CD8-positive, alpha-beta T cell (primary cell): ENCODE measurements at regions of chr6 and their contacts with region 1.

Region 1: DNA sequence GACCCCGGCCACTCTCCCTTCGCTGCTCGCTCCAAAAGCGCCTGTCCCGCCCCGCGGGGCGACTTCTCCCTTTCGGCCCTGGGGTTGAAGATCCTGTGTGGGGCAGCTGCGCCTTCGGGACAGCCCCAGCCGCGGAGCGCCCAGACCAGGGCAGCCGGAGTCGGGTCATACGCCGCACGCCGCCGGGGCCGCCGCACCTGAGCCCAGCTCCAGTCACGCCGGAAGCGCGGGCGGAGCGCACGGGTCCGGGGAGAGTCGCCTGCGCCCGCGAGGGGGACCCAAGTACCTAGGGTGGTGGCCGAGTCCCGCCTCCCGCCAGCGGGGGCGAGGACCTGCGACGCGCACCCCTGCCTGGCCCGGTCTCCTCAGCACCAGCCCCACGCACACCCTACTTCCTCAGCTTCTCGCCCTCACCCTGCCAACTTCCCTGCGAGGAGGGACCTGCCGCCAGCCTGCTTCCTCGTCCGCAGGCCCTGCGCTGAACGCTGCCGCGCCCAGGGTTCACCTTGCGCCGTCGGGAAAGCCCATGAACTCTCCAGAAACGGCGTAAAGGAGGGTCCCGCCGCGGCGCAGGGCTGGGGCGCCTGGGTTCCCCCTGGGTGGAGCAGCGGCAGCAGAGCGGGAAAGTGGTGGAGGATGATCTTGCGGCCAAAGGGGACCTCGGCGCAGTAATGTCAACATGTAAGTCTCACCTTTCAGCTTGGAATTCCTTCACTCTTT is at the start of gene ADGRG6:
- DNase-seq: peak in 8 of 9 experiments; percentile 4 to 69 (median 38)
- ATAC-seq: peak; percentile 70
- H3K4me3 ChIP-seq: peak within 1 kb of the TSS; percentile 42 to 61
- H3K4me3 Mint-ChIP-seq: peak within 1 kb of the TSS; percentile 85
- H3K27ac ChIP-seq: no peak within 1 kb of the TSS
- H3K27ac Mint-ChIP-seq: peak within 1 kb of the TSS; percentile 66
- H3K4me1 ChIP-seq: peaks cover 4% of the 10 kb centered on the region
- H3K4me1 Mint-ChIP-seq: peaks cover 15% of the 10 kb centered on the region
- H3K27me3 ChIP-seq: no peaks in the 10 kb centered on the region
- H3K27me3 Mint-ChIP-seq: peaks cover 15% of the 10 kb centered on the region
- CTCF ChIP-seq: no peak
- total RNA-seq, gene ADGRG6: 0.54 to 0.61 TPM

Region 2: GRCh38 chr6:142236691-142237090 is 65.1 kb before region 1 on chr6:
- CTCF ChIA-PET with region 1: interaction called, 3 read pairs
- POLR2A ChIA-PET with region 1: interaction called, 3 read pairs
- intact Hi-C with region 1: loop called in 1 of 2 experiments (anchors 10 kb)
- DNase-seq: no peak
- ATAC-seq: no peak
- H3K4me3 ChIP-seq: no peak overlapping the region
- H3K4me3 Mint-ChIP-seq: no peak overlapping the region
- H3K27ac ChIP-seq: no peak overlapping the region
- H3K27ac Mint-ChIP-seq: no peak overlapping the region
- H3K4me1 ChIP-seq: peaks cover 15% of the 10 kb centered on the region
- H3K4me1 Mint-ChIP-seq: peaks cover 18% of the 10 kb centered on the region
- H3K27me3 ChIP-seq: no peaks in the 10 kb centered on the region
- H3K27me3 Mint-ChIP-seq: peaks cover 4% of the 10 kb centered on the region
- CTCF ChIP-seq: no peak

Region 3: GRCh38 chr6:142322504-142323198 is 20.8 kb after region 1 on chr6:
- CTCF ChIA-PET with region 1: no interaction called
- POLR2A ChIA-PET with region 1: no interaction called
- intact Hi-C with region 1: no loop called
- DNase-seq: no peak
- ATAC-seq: no peak
- H3K4me3 ChIP-seq: no peak overlapping the region
- H3K4me3 Mint-ChIP-seq: no peak overlapping the region
- H3K27ac ChIP-seq: no peak overlapping the region
- H3K27ac Mint-ChIP-seq: no peak overlapping the region
- H3K4me1 ChIP-seq: no peaks in the 10 kb centered on the region
- H3K4me1 Mint-ChIP-seq: no peaks in the 10 kb centered on the region
- H3K27me3 ChIP-seq: no peaks in the 10 kb centered on the region
- H3K27me3 Mint-ChIP-seq: no peaks in the 10 kb centered on the region
- CTCF ChIP-seq: no peak

Region 4: GRCh38 chr6:142339968-142340658 is 38.3 kb after region 1 on chr6:
- CTCF ChIA-PET with region 1: no interaction called
- POLR2A ChIA-PET with region 1: no interaction called
- intact Hi-C with region 1: no loop called
- DNase-seq: no peak
- ATAC-seq: no peak
- H3K4me3 ChIP-seq: no peak overlapping the region
- H3K4me3 Mint-ChIP-seq: no peak overlapping the region
- H3K27ac ChIP-seq: no peak overlapping the region
- H3K27ac Mint-ChIP-seq: no peak overlapping the region
- H3K4me1 ChIP-seq: no peaks in the 10 kb centered on the region
- H3K4me1 Mint-ChIP-seq: no peaks in the 10 kb centered on the region
- H3K27me3 ChIP-seq: no peaks in the 10 kb centered on the region
- H3K27me3 Mint-ChIP-seq: peaks cover 3% of the 10 kb centered on the region
- CTCF ChIP-seq: no peak

Region 5: DNA sequence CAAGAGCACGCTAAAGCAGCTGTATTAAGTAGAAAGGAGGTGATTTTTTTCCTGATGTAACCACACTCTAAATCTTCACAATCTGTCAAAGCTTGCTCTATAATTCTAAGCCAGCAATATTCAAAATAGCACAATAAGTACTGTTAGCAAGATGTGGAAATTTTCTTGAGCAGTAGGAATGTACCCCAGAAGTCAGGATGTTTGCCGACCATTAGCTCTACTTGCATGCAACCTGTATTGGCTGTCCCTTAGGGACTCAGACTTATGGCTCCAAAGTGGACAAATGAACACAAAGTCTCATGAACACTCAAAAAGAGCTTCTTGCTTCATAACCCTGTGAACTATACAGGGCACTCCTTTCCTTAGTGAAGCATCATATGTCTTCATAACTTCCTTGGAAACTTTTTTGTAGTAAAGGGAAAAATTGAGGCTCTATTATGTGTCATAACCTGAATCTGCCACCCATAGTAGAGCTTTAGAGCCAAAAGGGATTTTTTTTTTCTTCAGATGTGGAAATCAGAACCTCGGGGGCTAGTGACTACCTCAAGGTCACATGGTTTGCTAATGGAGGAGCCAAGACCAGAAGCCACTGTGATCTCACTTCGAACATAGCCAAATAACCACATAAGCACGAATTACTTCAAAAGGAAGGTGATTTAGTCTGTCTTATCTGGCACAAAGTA is 54.5 kb after region 1 on chr6:
- CTCF ChIA-PET with region 1: no interaction called
- POLR2A ChIA-PET with region 1: no interaction called
- intact Hi-C with region 1: loop called in 1 of 2 experiments (anchors 5 kb)
- DNase-seq: peak in 1 of 9 experiments; percentile 4
- ATAC-seq: peak; percentile 17
- H3K4me3 ChIP-seq: no peak overlapping the region
- H3K4me3 Mint-ChIP-seq: no peak overlapping the region
- H3K27ac ChIP-seq: no peak overlapping the region
- H3K27ac Mint-ChIP-seq: peak overlapping the region; percentile 92
- H3K4me1 ChIP-seq: peaks cover 17% of the 10 kb centered on the region
- H3K4me1 Mint-ChIP-seq: peaks cover 20% of the 10 kb centered on the region
- H3K27me3 ChIP-seq: no peaks in the 10 kb centered on the region
- H3K27me3 Mint-ChIP-seq: peaks cover 1% of the 10 kb centered on the region
- CTCF ChIP-seq: no peak